Mammary epithelial cell (primary cell): ENCODE measurements at regions of chr18 and their contacts with region 1.

Region 1: DNA sequence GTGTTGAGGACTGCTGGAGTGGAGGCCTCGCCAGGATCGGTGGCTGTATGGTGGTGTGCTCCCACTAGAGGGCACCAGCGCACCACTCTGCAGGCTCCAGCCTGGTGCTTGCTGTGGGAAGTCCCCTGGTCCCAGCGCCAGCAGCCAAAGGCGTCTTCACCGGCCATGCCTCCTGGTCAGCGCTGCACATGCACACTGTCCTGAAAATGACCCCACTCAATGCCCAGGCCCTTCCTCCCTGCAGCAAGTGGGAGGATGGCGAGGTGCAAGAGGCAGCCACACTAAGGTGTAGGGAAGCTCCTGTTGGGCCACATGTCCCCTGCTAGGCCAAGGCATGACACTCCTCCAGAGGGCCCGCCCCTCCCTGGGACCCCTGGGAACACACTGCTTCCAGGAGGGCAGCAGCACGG is 136.5 kb downstream of the CTIF start:
- DNase-seq: peak; percentile 71
- H3K4me3 ChIP-seq: no peak overlapping the region
- H3K27ac ChIP-seq: no peak overlapping the region
- H3K4me1 ChIP-seq: peaks cover 3% of the 10 kb centered on the region
- H3K27me3 ChIP-seq: no peaks in the 10 kb centered on the region
- CTCF ChIP-seq: peak; percentile 95 to 96

Region 2: DNA sequence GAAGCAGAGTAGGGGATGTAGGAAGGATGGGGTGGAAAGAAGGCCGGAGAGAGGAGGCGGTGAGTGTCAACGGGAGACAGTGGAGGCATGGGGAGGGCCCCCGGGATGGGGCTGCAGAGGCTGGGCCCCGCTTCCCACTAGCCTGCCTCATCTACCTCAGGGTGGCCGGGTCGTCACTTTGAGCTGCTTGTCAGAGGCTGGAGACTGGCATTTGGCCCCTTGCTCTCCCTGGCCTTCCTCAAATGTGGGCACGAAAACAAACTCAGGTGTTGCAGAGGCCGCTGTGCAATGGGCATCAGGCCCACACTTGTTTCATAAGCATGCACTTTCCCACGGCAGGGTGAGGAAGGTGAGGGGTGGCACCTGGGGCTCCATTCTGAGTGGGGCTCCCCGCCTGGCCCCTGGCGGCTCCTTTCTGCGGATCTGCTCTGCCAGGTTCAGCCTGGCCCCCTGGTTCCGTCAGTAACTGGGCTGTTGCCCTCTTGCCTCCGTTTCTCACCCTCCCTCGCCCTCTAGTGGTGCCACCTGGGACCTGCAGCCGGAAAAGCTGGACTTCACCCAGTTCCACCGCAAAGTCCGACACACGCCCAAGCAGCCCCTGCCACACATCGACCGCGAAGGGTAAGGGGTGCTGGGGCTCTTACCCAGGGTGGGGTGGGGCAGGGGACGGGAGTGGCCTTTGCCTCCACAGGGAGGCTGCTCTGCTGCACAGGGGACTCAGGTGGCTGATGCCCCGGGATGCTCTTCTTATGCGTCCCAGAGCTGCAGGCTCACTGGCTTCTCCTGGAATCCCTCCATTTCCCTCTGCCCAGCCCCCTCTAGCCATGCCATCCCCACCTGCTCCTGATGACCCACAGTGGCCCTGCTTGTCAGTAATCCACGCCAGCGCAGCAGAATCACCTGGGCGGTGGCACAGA is 11.2 kb before region 1 on chr18:
- CTCF ChIA-PET with region 1: no interaction called
- dilution Hi-C with region 1: no loop called
- in situ Hi-C with region 1: no loop called
- intact Hi-C with region 1: no loop called
- DNase-seq: peak; percentile 28
- H3K4me3 ChIP-seq: no peak overlapping the region
- H3K27ac ChIP-seq: no peak overlapping the region
- H3K4me1 ChIP-seq: peaks cover 12% of the 10 kb centered on the region
- H3K27me3 ChIP-seq: no peaks in the 10 kb centered on the region
- CTCF ChIP-seq: peak; percentile 91 to 96

Region 3: GRCh38 chr18:48777026-48777743 is 101.8 kb after region 1 on chr18:
- CTCF ChIA-PET with region 1: no interaction called
- dilution Hi-C with region 1: no loop called
- in situ Hi-C with region 1: no loop called
- intact Hi-C with region 1: loop called (anchors 5 kb)
- DNase-seq: peak; percentile 12
- H3K4me3 ChIP-seq: no peak overlapping the region
- H3K27ac ChIP-seq: no peak overlapping the region
- H3K4me1 ChIP-seq: peaks cover 1% of the 10 kb centered on the region
- H3K27me3 ChIP-seq: no peaks in the 10 kb centered on the region
- CTCF ChIP-seq: peak; percentile 70 to 73

Region 4: GRCh38 chr18:48913201-48913600 is 237.8 kb after region 1 on chr18:
- CTCF ChIA-PET with region 1: no interaction called
- dilution Hi-C with region 1: no loop called
- in situ Hi-C with region 1: no loop called
- intact Hi-C with region 1: loop called (anchors 1 kb)
- DNase-seq: no peak
- H3K4me3 ChIP-seq: no peak overlapping the region
- H3K27ac ChIP-seq: no peak overlapping the region
- H3K4me1 ChIP-seq: no peaks in the 10 kb centered on the region
- H3K27me3 ChIP-seq: no peaks in the 10 kb centered on the region
- CTCF ChIP-seq: peak; percentile 25 to 49

Region 5: GRCh38 chr18:49178736-49179135 is 503.4 kb after region 1 on chr18:
- CTCF ChIA-PET with region 1: no interaction called
- dilution Hi-C with region 1: no loop called
- in situ Hi-C with region 1: loop called in 1 of 2 experiments (anchors 10 kb)
- intact Hi-C with region 1: loop called (anchors 1 kb)
- DNase-seq: no peak
- H3K4me3 ChIP-seq: no peak overlapping the region
- H3K27ac ChIP-seq: no peak overlapping the region
- H3K4me1 ChIP-seq: peaks cover 5% of the 10 kb centered on the region
- H3K27me3 ChIP-seq: no peaks in the 10 kb centered on the region
- CTCF ChIP-seq: peak; percentile 52 to 64

Region 6: DNA sequence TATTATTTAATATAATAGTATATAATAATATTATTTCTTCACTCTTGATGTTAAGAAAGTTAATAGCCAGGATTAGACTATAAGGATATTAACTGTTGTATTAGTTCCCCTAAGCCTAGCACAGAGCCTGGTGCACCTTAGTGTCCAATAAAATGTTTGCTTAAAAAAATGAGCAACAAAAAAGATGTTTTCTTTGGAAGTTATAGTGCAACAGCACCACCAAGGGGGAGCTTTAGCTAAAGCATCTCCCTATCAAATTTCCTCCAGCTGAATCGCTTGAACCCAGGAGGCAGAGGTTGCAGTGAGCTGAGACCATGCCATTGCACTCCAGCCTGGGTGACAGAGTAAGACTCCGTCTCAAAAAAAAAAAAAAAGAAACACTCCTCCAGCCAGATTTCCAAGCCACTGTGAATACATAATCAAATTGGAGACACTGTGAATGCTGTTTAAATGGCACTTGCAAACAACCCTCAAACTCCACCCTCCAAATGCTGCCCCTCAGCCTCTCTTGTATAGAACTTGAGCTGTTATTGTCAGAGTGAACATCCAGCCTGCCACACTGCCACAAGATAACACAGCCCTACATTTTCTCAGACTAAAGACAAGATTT is 563.2 kb after region 1 on chr18:
- CTCF ChIA-PET with region 1: no interaction called
- dilution Hi-C with region 1: no loop called
- in situ Hi-C with region 1: loop called (anchors 25 kb)
- intact Hi-C with region 1: loop called (anchors 1 kb)
- DNase-seq: no peak
- H3K4me3 ChIP-seq: no peak overlapping the region
- H3K27ac ChIP-seq: no peak overlapping the region
- H3K4me1 ChIP-seq: peaks cover 2% of the 10 kb centered on the region
- H3K27me3 ChIP-seq: no peaks in the 10 kb centered on the region
- CTCF ChIP-seq: peak; percentile 44 to 53

Region 7: DNA sequence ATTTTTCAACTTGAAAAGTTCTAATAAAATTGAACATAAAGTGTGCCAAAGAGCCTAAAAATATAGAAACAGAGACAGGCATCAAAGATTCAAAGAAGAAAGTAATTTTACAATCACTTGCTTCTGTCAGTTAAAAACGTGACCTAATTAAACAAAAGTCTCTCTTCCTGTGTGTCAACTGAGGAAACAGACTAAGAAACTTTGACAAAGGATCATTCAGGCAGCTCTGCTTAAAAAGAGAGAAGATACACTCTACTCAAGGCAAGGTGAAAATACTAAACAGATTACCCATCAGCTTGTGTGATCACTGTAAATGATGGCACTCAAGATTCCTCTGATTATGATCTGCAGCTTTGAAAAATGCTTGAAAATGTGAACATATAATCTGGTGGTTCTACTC is 737.3 kb after region 1 on chr18:
- CTCF ChIA-PET with region 1: no interaction called
- dilution Hi-C with region 1: no loop called
- in situ Hi-C with region 1: no loop called
- intact Hi-C with region 1: loop called (anchors 1 kb)
- DNase-seq: no peak
- H3K4me3 ChIP-seq: no peak overlapping the region
- H3K27ac ChIP-seq: no peak overlapping the region
- H3K4me1 ChIP-seq: no peaks in the 10 kb centered on the region
- H3K27me3 ChIP-seq: no peaks in the 10 kb centered on the region
- CTCF ChIP-seq: no peak

Region 8: GRCh38 chr18:49447810-49448745 is 772.7 kb after region 1 on chr18:
- CTCF ChIA-PET with region 1: no interaction called
- dilution Hi-C with region 1: no loop called
- in situ Hi-C with region 1: loop called (anchors 25 kb)
- intact Hi-C with region 1: loop called (anchors 1 kb)
- DNase-seq: peak; percentile 63
- H3K4me3 ChIP-seq: no peak overlapping the region
- H3K27ac ChIP-seq: no peak overlapping the region
- H3K4me1 ChIP-seq: no peaks in the 10 kb centered on the region
- H3K27me3 ChIP-seq: no peaks in the 10 kb centered on the region
- CTCF ChIP-seq: peak; percentile 71 to 72